ENCODE measurements at regions of chr12 and their contacts with region 1.

Region 1: DNA sequence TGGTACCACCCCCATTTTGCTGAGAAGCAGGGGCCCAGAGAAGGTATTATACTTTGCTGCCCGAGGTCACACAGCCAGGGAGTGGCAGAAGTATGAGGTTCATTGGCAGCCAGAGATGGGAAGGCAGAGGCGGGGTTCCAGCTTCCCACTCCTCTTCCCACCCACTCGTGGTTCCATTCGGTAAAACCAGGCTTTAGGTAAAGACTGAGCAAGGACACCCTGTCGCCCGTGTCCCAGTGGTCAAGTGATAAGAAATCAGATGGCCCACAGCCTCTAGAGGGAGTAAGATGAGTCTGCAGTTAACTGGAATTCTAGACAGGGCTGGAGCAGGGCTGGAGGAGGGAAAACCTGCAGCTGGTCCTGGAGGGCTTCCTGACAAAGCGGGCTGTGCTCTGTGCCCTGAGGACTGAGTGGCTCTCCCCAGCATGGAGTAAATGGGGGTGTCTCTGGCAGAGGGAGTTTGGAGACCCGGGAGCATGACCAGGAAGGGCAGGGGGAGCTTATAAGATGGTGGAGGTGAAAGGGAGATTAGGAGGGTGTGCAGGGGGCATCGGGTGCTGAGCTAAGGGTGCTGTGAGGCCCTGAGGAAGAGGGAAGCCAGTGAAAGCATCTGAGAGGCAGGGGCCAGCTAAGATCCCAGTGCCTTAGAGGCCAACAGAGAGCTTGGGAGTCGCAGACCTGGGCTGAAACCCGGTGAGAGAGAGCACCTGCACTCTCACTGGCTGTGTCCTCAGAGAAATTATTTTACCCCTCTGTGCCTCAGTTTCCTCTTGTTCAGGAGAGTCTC is 5.8 kb downstream of the FAM222A start:
- DNase-seq: peak in 8 of 42 donors; percentile 33 to 55 (median 46)

Region 2: DNA sequence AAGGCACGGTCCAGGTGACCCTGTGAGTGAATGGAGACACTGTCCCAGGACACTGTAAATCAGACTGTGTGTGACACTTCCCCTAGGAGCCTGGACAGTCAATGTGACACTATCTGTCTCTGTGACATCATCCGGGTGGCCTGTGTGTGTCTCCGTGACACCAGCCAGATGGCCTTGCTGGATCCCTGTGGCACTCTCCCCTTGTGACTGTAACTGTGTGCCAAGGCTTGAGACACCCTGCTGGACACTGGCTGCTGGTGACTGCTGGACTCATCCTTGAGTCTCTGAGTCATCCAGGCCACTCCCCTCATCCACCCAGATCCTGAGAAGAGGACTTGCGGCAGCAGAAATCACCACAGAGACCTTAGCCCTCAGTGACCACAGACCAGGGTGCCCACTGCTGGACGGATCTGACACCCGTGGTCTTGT is 94.3 kb before region 1 on chr12:
- intact Hi-C with region 1: loop called (anchors 5 kb)
- DNase-seq: peak; percentile 63 to 98 (median 92)

Region 3: GRCh38 chr12:109768603-109769355 is 49.4 kb after region 1 on chr12:
- intact Hi-C with region 1: loop called (anchors 2 kb)
- DNase-seq: peak in 15 of 42 donors; percentile 7 to 40 (median 17)

Region 4: DNA sequence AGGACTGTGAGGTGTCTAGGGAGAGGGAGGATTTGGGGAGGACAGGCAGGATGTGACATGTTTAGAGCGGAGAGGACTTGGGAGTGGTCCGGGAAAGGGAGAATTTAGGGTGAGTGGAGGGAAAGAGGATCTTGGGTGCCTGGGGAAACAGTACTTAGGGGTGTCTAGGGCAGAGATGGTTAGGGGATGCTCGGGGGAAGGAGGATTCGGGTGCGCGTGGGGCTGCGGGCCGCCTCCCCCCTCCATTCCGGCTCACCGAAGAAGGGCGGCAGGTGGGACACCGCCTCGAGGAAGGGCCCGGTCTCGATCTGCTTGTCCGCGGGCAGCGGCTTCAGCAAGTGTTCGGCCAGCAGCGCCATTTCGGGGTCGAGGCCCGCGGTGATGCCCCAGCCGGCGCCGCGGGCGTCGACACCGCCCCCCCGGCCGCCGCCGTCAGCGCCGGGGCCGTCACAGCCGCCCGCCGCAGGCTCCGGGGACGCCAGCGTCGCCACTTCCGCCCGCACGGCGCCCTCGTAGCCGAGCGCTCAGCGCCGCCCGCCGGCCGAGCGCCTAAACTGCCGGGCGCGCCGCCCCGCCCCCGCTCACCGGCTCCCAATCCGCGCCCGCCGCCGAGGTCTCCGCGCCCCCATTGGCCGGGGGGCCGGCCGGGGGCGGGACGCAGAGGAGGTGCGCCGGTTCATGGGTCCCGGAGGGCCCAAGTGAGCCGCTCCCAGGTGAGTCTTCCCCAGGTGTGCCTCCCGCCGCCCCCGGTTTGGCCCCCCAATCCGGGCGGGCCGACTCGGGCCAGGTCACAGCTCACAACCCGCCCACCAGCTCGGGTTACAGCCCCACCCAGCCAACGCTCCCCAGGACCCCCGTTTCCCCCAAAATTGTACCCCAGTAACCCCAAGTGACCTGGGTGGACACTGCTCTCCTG is 160.8 kb after region 1 on chr12 and contains the start of gene GLTP:
- intact Hi-C with region 1: loop called (anchors 10 kb)
- DNase-seq: peak; percentile 30 to 92 (median 84)

Measured in head of caudate nucleus (tissue), 42 donors.